ENCODE measurements at regions of chr3 and their contacts with region 1.

Region 1: DNA sequence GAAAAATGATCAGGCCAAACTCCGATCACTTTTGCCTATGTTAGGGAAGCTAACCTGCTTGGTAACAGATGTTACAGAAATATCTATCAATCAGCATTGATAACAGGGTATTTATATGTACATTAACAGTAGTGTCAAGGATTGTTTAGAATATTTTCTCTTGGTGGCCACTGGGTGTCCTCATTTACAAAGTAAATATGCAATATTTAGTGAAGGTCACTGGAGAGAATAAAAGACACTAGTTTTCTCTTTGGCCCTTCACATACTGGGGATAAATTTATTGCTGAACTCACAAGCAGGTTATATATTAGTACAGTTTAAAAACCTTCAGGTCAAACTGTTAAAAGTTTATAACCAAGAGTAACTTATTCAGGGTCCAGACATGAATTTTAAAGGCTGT is 69.0 kb downstream of the TIGIT start:
- DNase-seq: no peak
- ATAC-seq: no peak
- H3K4me3 ChIP-seq: no peak overlapping the region
- H3K4me3 Mint-ChIP-seq: no peak overlapping the region
- H3K27ac ChIP-seq: no peak overlapping the region
- H3K27ac Mint-ChIP-seq: no peak overlapping the region
- H3K4me1 ChIP-seq: no peaks in the 10 kb centered on the region
- H3K4me1 Mint-ChIP-seq: no peaks in the 10 kb centered on the region
- H3K27me3 ChIP-seq: no peaks in the 10 kb centered on the region
- H3K27me3 Mint-ChIP-seq: no peaks in the 10 kb centered on the region

Region 2: DNA sequence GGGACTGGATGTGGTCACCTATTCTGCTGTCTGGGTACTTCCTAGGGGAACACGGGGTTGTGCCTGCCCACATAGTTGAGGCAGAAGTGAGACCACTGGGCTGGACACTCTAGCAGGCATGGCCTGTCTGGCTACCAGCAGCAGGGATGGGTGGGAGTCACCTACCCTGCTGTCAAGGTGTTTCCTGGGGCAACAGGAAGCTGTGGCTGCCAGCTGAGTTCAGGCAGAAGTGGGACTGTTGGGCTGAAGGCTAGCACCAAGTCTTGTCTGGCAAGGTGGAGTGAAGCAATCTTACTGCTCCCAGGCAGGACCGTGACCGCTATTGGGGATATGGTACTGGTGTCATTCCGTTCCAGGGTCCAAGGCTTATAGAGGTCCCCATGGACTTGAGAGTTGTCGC is 435.3 kb before region 1 on chr3:
- CTCF ChIA-PET with region 1: no interaction called
- POLR2A ChIA-PET with region 1: no interaction called
- intact Hi-C with region 1: loop called in 1 of 2 experiments (anchors 5 kb)
- DNase-seq: no peak
- ATAC-seq: no peak
- H3K4me3 ChIP-seq: no peak overlapping the region
- H3K4me3 Mint-ChIP-seq: no peak overlapping the region
- H3K27ac ChIP-seq: no peak overlapping the region
- H3K27ac Mint-ChIP-seq: no peak overlapping the region
- H3K4me1 ChIP-seq: no peaks in the 10 kb centered on the region
- H3K4me1 Mint-ChIP-seq: no peaks in the 10 kb centered on the region
- H3K27me3 ChIP-seq: peaks cover 0 to 3% of the 10 kb centered on the region in 2 donors
- H3K27me3 Mint-ChIP-seq: peaks cover 7 to 42% (median 18%) of the 10 kb centered on the region in 5 donors

Region 3: GRCh38 chr3:114194750-114195149 is 168.1 kb before region 1 on chr3:
- CTCF ChIA-PET with region 1: no interaction called
- POLR2A ChIA-PET with region 1: no interaction called
- intact Hi-C with region 1: no loop called
- DNase-seq: no peak
- ATAC-seq: no peak
- H3K4me3 ChIP-seq: no peak overlapping the region
- H3K4me3 Mint-ChIP-seq: no peak overlapping the region
- H3K27ac ChIP-seq: no peak overlapping the region
- H3K27ac Mint-ChIP-seq: no peak overlapping the region
- H3K4me1 ChIP-seq: no peaks in the 10 kb centered on the region
- H3K4me1 Mint-ChIP-seq: peaks cover 0 to 4% (median 0%) of the 10 kb centered on the region in 7 donors
- H3K27me3 ChIP-seq: no peaks in the 10 kb centered on the region
- H3K27me3 Mint-ChIP-seq: no peaks in the 10 kb centered on the region

Measured in naive thymus-derived CD4-positive, alpha-beta T cell (primary cell).